Posterior cingulate gyrus (tissue), 11 donors: ENCODE measurements at regions of chr4 and their contacts with region 1.

Region 1: GRCh38 chr4:55546756-55547465 is at the start of gene CLOCK:
- DNase-seq: peak; percentile 76 to 97 (median 84)

Region 2: GRCh38 chr4:55345980-55346850 is 200.7 kb before region 1 on chr4 and contains the start of gene SRD5A3:
- intact Hi-C with region 1: loop called (anchors 1 kb)
- DNase-seq: peak; percentile 67 to 97 (median 80)

Region 3: DNA sequence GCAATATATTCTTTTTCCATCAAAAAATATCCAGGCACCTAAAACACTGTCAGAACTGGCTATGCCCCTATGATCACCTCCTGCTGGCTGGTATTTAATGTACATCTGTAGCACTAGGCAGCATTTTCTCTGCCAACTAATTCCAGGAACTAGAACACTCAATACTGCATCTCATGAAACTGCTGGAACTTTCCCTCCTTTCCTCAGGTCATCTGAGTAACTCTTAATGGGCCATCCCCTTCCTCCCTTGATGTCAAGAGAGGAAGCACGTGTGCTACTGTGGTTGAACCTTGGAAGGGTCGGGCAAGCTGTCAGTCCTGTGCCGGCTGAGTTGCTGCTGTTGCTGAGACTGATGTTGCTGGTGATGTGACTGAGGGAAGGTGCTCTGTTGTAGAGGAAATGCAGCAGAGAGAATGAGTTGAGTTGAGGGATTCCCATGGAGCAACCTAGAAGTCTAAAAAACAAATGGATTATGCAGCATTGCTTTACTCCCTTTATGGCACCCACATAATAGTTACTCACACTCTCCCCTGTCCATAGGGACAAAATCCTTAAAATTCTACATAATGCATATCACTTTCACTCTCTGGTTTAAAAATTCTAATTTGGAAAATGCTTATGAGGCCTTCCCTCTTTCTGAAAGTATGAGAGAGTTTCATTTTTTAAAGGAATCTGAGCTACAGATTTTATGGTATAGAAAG is 111.6 kb before region 1 on chr4:
- intact Hi-C with region 1: loop called (anchors 10 kb)
- DNase-seq: no peak

Region 4: GRCh38 chr4:55887594-55887993 is 340.7 kb after region 1 on chr4:
- intact Hi-C with region 1: no loop called
- DNase-seq: no peak

Region 5: GRCh38 chr4:57405385-57405784 is 1858.5 kb after region 1 on chr4:
- intact Hi-C with region 1: no loop called
- DNase-seq: no peak